GM12878 (cell line): ENCODE measurements at regions of chr2 and their contacts with region 1.

Region 1: GRCh38 chr2:98731041-98731893 is at the start of gene MGAT4A:
- DNase-seq: no peak
- ATAC-seq: peak; percentile 87
- H3K4me3 ChIP-seq: peak within 1 kb of the TSS; percentile 80
- H3K27ac ChIP-seq: no peak within 1 kb of the TSS
- H3K4me1 ChIP-seq: no peaks in the 10 kb centered on the region; the same call in 1 of the 2 replicates
- H3K27me3 ChIP-seq: no peaks in the 10 kb centered on the region; a peak in 1 of 4 replicates
- CTCF ChIP-seq: no peak
- EP300 ChIP-seq: no peak
- POLR2A ChIP-seq: peak; percentile 69
- RAD21 ChIP-seq: no peak
- polyA plus RNA-seq, gene MGAT4A: 10.2 to 11.9 TPM

Region 2: DNA sequence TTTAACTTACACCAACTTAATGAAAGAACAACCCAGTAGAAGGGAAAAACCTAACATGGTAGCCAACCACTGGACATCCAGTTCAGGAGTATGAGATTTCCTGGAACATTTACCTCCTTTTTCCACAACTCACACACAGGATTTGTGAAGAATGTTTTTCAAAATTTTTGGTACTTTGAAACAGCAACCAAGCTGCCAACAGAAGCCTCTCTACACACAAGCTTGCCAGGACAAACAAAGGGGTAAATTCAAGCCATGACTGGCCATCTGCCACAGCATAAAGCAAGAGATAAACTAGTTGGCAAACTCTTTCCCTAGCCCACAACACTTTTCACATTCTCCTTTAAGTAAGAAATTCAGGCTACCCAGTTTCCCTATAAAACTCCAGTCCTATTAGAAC is 21.7 kb before region 1 on chr2:
- CTCF ChIA-PET with region 1: interaction called, 3 read pairs
- POLR2A ChIA-PET with region 1: interaction called, 9 read pairs
- RAD21 ChIA-PET with region 1: interaction called, 4 read pairs
- SMC1A ChIA-PET with region 1: interaction called, 10 read pairs
- in situ Hi-C with region 1: no loop called
- intact Hi-C with region 1: no loop called
- DNase-seq: no peak
- ATAC-seq: no peak
- H3K4me3 ChIP-seq: no peak overlapping the region
- H3K27ac ChIP-seq: no peak overlapping the region
- H3K4me1 ChIP-seq: peaks cover 18% of the 10 kb centered on the region
- H3K27me3 ChIP-seq: no peaks in the 10 kb centered on the region
- CTCF ChIP-seq: no peak
- EP300 ChIP-seq: no peak
- POLR2A ChIP-seq: no peak
- RAD21 ChIP-seq: no peak

Region 3: GRCh38 chr2:98717621-98718020 is 13.6 kb before region 1 on chr2:
- CTCF ChIA-PET with region 1: interaction called, 4 read pairs
- POLR2A ChIA-PET with region 1: interaction called, 9 read pairs
- RAD21 ChIA-PET with region 1: no interaction called
- SMC1A ChIA-PET with region 1: interaction called, 16 read pairs
- in situ Hi-C with region 1: no loop called
- intact Hi-C with region 1: no loop called
- DNase-seq: no peak
- ATAC-seq: no peak
- H3K4me3 ChIP-seq: no peak overlapping the region
- H3K27ac ChIP-seq: no peak overlapping the region
- H3K4me1 ChIP-seq: peaks cover 16% of the 10 kb centered on the region
- H3K27me3 ChIP-seq: no peaks in the 10 kb centered on the region
- CTCF ChIP-seq: no peak
- EP300 ChIP-seq: no peak
- POLR2A ChIP-seq: no peak
- RAD21 ChIP-seq: no peak

Region 4: DNA sequence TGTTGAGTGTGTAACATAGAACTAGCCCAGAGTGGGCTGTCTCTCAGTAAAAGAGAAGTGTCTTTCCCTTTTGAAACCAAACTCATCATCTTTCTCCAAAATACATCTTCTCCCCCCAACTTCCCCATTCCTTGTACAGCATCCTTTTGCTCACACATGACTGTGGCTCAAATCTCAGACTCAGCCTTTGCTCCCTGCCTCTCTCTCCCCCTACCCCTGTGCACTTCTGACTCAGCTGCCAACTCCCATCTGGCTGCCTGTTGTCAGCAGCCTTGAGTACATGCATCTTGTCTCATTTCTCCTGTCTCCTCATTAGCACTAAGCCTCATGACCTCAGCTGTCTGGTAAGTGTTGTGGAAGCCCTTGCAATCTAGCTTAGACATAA is 17.8 kb after region 1 on chr2:
- CTCF ChIA-PET with region 1: interaction called, 4 read pairs
- POLR2A ChIA-PET with region 1: interaction called, 3 read pairs
- RAD21 ChIA-PET with region 1: no interaction called
- SMC1A ChIA-PET with region 1: interaction called, 14 read pairs
- in situ Hi-C with region 1: no loop called
- intact Hi-C with region 1: no loop called
- DNase-seq: no peak
- ATAC-seq: peak; percentile 86
- H3K4me3 ChIP-seq: peak overlapping the region; percentile 37; the same call in 1 of the 2 replicates
- H3K27ac ChIP-seq: no peak overlapping the region
- H3K4me1 ChIP-seq: peaks cover 23% of the 10 kb centered on the region
- H3K27me3 ChIP-seq: no peaks in the 10 kb centered on the region
- CTCF ChIP-seq: no peak
- EP300 ChIP-seq: no peak
- POLR2A ChIP-seq: no peak
- RAD21 ChIP-seq: no peak

Region 5: DNA sequence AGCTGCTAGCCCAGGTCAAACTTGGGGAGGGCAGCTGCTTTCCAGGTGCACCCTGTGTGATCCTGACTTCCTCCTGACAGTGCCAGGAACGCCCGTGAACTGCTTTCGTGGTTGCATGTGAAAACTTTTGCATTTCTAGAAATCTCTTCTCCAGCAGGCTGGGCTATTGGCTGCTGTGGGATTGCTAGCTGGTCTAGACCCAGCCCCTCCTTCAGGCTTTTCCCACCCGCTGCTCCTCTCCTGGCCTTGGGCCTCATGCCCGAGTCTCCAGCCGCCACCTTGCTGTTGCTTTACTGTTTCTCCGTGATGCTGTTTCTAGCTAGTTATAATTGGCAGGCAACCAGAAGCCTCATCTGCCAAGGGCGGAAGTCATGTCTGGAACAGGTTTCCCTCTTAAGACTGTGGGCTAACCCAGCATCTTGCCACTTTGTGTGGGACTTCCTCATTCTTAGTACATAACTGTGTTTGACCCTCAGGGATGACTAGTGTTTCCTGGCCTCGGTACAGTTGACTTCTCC is 26.7 kb after region 1 on chr2:
- CTCF ChIA-PET with region 1: interaction called, 10 read pairs
- POLR2A ChIA-PET with region 1: interaction called, 16 read pairs
- RAD21 ChIA-PET with region 1: interaction called, 8 read pairs
- SMC1A ChIA-PET with region 1: interaction called, 37 read pairs
- in situ Hi-C with region 1: no loop called
- intact Hi-C with region 1: no loop called
- DNase-seq: peak; percentile 81
- ATAC-seq: peak; percentile 89
- H3K4me3 ChIP-seq: 0 out of 2 replicates have a peak overlapping the region, but pooled peaks have one; percentile 17
- H3K27ac ChIP-seq: peak overlapping the region; percentile 35
- H3K4me1 ChIP-seq: peaks cover 40% of the 10 kb centered on the region
- H3K27me3 ChIP-seq: no peaks in the 10 kb centered on the region
- CTCF ChIP-seq: no peak
- EP300 ChIP-seq: peak in 1 of 2 experiments; percentile 29; a peak in 2 of 4 replicates
- POLR2A ChIP-seq: no peak
- RAD21 ChIP-seq: no peak

Region 6: DNA sequence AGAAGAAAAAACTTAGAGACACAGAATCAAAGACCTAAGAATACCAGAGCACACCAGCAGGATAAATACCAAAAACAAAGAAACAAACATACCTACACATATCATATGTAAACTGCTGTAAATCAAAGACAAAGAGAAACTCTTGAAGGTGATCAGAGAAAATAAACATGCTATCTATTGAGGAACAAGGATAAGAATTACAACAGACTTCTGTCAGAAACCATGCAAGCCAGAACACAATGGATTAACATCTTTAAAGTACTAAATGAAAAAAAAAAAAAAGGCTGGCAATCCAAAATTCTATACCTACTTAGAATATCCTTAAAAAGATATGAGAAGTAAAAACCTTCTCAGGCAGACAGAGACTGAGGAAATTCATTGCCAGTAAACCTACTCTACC is 51.3 kb after region 1 on chr2:
- CTCF ChIA-PET with region 1: no interaction called
- POLR2A ChIA-PET with region 1: no interaction called
- RAD21 ChIA-PET with region 1: no interaction called
- SMC1A ChIA-PET with region 1: no interaction called
- in situ Hi-C with region 1: no loop called
- intact Hi-C with region 1: no loop called
- DNase-seq: no peak
- ATAC-seq: no peak
- H3K4me3 ChIP-seq: no peak overlapping the region
- H3K27ac ChIP-seq: no peak overlapping the region
- H3K4me1 ChIP-seq: no peaks in the 10 kb centered on the region
- H3K27me3 ChIP-seq: no peaks in the 10 kb centered on the region
- CTCF ChIP-seq: no peak
- EP300 ChIP-seq: no peak
- POLR2A ChIP-seq: no peak
- RAD21 ChIP-seq: no peak

Region 7: GRCh38 chr2:98835831-98836385 is 104.6 kb after region 1 on chr2:
- CTCF ChIA-PET with region 1: no interaction called
- POLR2A ChIA-PET with region 1: no interaction called
- RAD21 ChIA-PET with region 1: interaction called, 11 read pairs
- SMC1A ChIA-PET with region 1: interaction called, 5 read pairs
- in situ Hi-C with region 1: no loop called
- intact Hi-C with region 1: loop called (anchors 2 kb)
- DNase-seq: peak; percentile 4
- ATAC-seq: peak; percentile 85
- H3K4me3 ChIP-seq: no peak overlapping the region
- H3K27ac ChIP-seq: no peak overlapping the region
- H3K4me1 ChIP-seq: no peaks in the 10 kb centered on the region
- H3K27me3 ChIP-seq: no peaks in the 10 kb centered on the region
- CTCF ChIP-seq: no peak
- EP300 ChIP-seq: peak in 1 of 2 experiments; percentile 68; a peak in 1 of 4 replicates
- POLR2A ChIP-seq: no peak
- RAD21 ChIP-seq: no peak